Heart left ventricle (tissue), 16 donors: ENCODE measurements at regions of chr11 and their contacts with region 1.

Region 1: DNA sequence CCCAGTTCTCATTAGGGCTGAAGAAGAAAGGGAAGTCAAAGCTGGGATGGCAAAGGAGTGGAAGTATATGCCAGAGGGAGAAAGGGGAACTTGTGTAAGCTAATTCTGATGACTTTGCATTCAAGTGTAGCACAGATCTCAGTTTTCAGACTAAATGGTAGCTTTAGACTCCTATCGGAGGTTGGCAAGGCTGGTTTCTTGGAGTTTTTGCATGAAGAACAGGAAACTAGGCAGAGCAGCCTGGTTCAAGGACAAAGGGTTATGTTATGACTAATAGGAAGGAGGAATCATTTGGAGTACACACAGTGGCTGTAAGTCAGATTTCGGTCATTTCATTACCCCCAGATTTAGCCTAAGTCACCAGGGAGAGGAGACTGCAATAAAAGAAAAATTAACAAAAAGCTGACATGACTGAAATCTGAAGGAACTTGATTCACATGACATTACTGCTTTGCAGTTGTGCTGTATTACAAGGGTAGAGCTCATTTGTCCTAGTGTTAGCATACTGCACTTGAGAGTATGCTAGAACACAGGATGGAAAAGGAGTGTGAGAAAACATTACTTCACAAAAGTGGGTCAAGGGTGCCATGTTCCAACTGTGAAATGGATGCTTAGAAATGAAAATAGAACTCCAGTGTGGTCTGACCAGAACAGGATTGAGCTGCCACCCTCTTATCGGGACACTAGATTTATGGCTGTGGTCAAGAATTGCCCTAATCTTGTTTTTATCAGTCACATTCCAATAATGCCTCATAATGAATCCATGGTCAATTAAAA is 23.6 kb downstream of the ADM start:
- DNase-seq: no peak
- ATAC-seq: peak; percentile 21 to 56 (median 46)
- H3K4me3 ChIP-seq: no peak overlapping the region
- H3K27ac ChIP-seq: peak overlapping the region in 3 of 12 donors; percentile 10 to 79 (median 72)
- H3K4me1 ChIP-seq: peaks cover 0 to 58% (median 26%) of the 10 kb centered on the region in 12 donors
- H3K27me3 ChIP-seq: no peaks in the 10 kb centered on the region
- CTCF ChIP-seq: no peak
- POLR2A ChIP-seq: no peak

Region 2: DNA sequence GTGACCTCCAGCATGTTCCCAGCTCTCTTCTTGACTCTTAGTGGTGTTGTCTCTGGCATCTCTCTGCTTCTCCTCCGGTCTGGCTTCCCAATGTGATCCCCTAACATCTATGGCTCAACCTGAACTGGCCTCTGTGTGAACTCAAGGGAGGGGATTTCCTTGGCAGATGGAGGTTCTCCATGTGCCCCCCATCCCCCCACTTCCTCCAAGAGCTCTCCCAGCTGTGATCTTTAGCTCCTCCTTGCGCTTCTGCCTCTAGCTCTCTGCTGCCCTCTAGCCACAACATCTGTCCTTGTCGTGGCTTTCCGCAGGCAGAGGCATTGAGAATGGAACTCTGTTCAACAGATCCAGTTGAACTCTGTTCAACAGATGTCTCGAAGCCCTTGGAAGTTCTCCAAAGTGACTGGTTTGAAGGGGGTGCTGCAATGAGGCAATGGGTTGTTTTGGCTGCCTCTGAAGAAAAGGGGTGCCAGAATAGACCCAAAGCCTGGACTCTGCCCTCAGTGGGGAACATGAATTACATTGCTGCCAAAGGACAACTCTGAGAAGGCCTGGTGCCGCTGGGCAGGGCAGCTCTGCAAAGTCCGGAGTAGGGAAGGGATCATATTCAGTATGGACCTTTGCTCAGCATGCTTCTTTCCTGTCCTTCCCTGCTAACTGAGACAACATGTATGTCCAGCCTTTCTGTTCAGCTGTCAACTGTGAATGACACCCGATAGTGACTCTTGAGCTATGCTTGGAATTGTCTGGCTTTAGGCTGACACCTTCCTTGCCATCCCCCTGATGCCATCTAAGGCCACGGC is 38.3 kb after region 1 on chr11:
- intact Hi-C with region 1: loop called in 2 of 10 experiments (anchors 1 to 5 kb)
- DNase-seq: peak; percentile 72 to 88 (median 87)
- ATAC-seq: peak; percentile 76 to 96 (median 94)
- H3K4me3 ChIP-seq: no peak overlapping the region
- H3K27ac ChIP-seq: peak overlapping the region in 2 of 12 donors; percentile 7 to 42
- H3K4me1 ChIP-seq: peaks cover 0 to 10% (median 7%) of the 10 kb centered on the region in 12 donors
- H3K27me3 ChIP-seq: no peaks in the 10 kb centered on the region
- CTCF ChIP-seq: peak; percentile 77 to 94 (median 86)
- POLR2A ChIP-seq: no peak

Region 3: DNA sequence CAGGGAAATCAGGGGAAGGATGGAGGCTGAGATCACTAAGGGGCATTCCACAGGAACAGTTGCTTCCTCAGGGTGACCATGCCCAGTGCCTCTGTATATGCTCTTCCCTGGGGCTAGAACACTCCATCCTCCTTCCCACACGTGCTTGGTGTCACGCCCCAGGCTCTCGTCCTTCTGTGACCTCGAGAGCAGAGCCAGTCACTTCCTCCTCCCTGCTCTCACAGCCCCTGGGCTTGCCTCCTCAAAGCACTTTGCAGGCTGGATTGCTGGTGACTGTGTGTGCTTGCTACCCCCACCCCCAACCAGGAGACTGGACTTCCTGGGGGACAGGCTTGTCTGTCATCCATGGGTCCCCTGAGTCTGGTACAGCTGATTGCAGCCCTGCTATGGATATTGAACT is 70.0 kb after region 1 on chr11:
- intact Hi-C with region 1: loop called in 1 of 10 experiments (anchors 10 kb)
- DNase-seq: peak in 2 of 5 donors; percentile 35 to 58
- ATAC-seq: peak; percentile 58 to 69 (median 63)
- H3K4me3 ChIP-seq: no peak overlapping the region
- H3K27ac ChIP-seq: no peak overlapping the region
- H3K4me1 ChIP-seq: peaks cover 0 to 57% (median 1%) of the 10 kb centered on the region in 12 donors
- H3K27me3 ChIP-seq: no peaks in the 10 kb centered on the region
- CTCF ChIP-seq: no peak
- POLR2A ChIP-seq: no peak

Region 4: GRCh38 chr11:10502770-10503169 is 174.3 kb after region 1 on chr11:
- intact Hi-C with region 1: no loop called
- DNase-seq: peak in 1 of 5 donors; percentile 38
- ATAC-seq: peak; percentile 2 to 68 (median 48)
- H3K4me3 ChIP-seq: no peak overlapping the region
- H3K27ac ChIP-seq: peak overlapping the region in 2 of 12 donors; percentile 27 to 90
- H3K4me1 ChIP-seq: peaks cover 0 to 25% (median 0%) of the 10 kb centered on the region in 12 donors
- H3K27me3 ChIP-seq: no peaks in the 10 kb centered on the region
- CTCF ChIP-seq: no peak
- POLR2A ChIP-seq: no peak